Activated T-helper 1 cell treated with anti-CD3 and anti-CD28 coated beads, Interleukin-12 subunit alpha, Interleukin-12 subunit beta, Interleukin-2, Interleukin-4 antibody, amounts not matched to agents 30 ng/mL and 10 ng/mL and 1 ng/mL, durations not matched to agents 14 hours and 24 hours and 36 hours (primary cell): ENCODE measurements at regions of chr11 and their contacts with region 1.

Region 1: DNA sequence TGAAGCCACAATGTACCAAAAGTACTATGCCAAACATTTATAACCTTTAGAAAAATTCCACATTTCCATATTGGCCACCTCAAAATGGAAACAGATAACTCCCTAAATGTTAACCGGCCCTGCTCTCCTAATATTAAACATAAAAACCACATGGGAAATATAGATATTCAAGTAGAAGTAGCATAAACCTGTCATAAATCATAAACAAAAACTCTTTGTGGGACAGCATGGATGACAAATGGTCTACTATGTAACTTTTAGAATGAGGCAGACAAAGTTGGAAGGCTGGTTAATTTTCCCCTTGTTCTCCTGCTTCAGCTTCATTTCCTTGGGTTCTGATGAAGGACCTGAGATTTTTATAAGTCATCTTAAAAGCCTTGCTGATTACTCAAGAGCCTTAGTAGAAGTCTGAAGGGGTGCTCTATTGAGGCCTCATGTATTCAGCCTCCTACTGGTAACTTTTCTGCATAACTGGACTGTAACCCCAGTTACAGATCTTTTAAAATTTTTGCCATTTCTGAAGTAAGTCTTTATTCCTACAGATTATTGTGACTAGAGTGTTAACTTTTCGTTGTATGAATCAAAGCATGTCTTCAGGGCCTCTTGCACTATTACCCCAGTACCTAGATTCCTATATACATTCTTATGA is 116.4 kb downstream of the STIM1 start:
- DNase-seq: no peak
- H3K4me3 Mint-ChIP-seq: no peak overlapping the region
- H3K27ac Mint-ChIP-seq: no peak overlapping the region
- H3K4me1 Mint-ChIP-seq: peaks cover 63% of the 10 kb centered on the region
- H3K27me3 Mint-ChIP-seq: no peaks in the 10 kb centered on the region

Region 2: DNA sequence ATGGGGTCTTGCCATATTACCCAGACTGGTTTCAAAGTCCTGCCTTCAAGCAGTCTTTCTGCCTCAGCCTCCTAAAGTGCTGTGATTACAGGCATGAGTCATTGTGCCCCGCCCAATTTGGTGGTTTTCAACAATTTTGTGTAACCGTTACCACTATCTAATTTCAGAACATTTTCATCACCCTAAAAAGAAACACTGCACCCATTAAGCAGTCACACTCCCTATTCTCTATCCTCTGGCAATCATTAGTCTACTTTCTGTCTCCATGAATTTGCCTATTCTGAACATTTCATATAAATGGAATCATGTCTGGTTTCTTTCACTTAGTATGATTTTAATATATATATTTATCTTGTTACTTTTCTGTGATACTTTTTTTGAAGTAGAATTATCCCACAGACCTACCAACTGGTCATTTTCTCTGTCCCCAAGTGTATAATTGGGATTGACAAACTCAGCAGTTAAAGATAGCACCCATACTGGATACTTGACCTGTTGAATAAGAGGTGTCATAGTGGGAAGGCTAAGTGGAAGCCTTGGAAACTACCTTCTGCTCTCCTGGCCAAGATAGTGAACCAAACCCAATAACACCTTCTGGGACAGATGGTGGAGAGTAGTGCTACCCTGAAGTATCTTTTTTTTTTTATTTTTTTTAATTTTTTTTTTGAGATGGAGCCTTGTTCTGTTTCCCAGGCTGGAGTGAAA is 51.6 kb before region 1 on chr11:
- intact Hi-C with region 1: loop called (anchors 1 kb)
- DNase-seq: peak; percentile 59
- H3K4me3 Mint-ChIP-seq: no peak overlapping the region
- H3K27ac Mint-ChIP-seq: peak overlapping the region; percentile 43
- H3K4me1 Mint-ChIP-seq: peaks cover 55% of the 10 kb centered on the region
- H3K27me3 Mint-ChIP-seq: no peaks in the 10 kb centered on the region

Region 3: DNA sequence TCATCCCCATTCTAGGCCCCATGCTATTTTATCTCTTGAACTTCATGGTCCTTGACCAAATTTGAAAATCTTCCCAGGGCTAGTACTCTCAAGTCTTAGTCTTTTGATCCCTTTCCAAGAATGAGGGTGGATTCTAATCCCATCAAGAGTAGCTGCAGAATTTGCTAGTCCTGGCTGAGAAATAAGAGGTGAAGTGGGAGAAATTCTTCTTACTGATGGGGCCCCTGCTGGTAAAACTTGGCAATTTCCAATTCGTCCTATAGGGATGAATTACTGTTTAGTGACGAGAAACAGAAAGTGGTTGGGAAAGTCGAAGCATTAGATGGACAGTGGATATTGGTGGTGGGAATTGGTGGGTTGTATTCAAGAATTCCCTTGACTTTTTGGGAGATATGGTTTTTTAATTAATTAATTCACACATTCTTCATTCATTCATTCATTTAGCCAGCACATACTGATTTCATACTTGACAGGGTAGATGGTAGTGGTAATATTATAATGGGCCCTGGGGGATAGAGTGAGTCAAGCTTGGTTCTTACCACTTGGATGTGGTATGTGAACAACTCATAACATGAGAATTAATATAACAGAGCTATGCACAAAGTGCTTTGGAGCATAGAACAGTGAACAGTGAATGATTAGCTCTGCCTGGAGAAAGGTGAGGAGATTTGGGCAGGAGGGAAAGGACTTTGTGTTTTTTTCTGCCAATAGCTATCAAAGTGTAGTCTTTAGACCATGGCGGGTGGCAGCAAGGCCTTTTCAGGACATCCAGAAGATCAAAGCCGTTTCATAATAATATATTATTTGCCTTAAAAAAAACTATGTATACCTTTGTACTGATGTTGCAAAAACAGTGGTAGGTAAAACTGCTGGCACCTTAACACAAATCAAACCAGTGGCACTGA is 12.6 kb before region 1 on chr11:
- intact Hi-C with region 1: loop called (anchors 1 kb)
- DNase-seq: no peak
- H3K4me3 Mint-ChIP-seq: no peak overlapping the region
- H3K27ac Mint-ChIP-seq: no peak overlapping the region
- H3K4me1 Mint-ChIP-seq: peaks cover 70% of the 10 kb centered on the region
- H3K27me3 Mint-ChIP-seq: no peaks in the 10 kb centered on the region

Region 4: DNA sequence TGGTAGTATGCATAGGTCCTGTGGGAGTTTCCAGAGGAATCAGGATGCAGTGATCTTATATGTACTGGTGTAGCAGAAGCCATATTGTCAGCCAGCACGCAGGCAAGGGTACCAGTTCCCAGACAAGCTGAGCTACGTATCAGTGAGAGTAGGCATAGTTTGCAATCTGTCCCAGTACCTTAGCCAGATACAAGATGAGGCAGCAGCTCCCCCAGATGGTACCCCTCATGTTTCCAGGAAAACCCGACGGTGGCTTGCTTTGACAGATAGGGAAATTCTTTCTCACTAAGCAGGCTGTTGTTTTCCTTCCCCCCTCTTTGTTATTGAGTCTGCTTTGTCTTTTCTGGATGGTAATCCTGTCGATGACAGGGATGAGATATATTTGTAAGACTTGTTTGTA is 13.0 kb after region 1 on chr11:
- intact Hi-C with region 1: loop called (anchors 1 kb)
- DNase-seq: peak; percentile 8
- H3K4me3 Mint-ChIP-seq: no peak overlapping the region
- H3K27ac Mint-ChIP-seq: peak overlapping the region; percentile 59
- H3K4me1 Mint-ChIP-seq: peaks cover 76% of the 10 kb centered on the region
- H3K27me3 Mint-ChIP-seq: no peaks in the 10 kb centered on the region

Region 5: GRCh38 chr11:4065601-4066377 is 93.9 kb after region 1 on chr11:
- intact Hi-C with region 1: loop called (anchors 5 kb)
- DNase-seq: no peak
- H3K4me3 Mint-ChIP-seq: no peak overlapping the region
- H3K27ac Mint-ChIP-seq: no peak overlapping the region
- H3K4me1 Mint-ChIP-seq: peaks cover 61% of the 10 kb centered on the region
- H3K27me3 Mint-ChIP-seq: no peaks in the 10 kb centered on the region

Region 6: GRCh38 chr11:4076774-4077173 is 104.9 kb after region 1 on chr11:
- intact Hi-C with region 1: no loop called
- DNase-seq: no peak
- H3K4me3 Mint-ChIP-seq: no peak overlapping the region
- H3K27ac Mint-ChIP-seq: no peak overlapping the region
- H3K4me1 Mint-ChIP-seq: peaks cover 9% of the 10 kb centered on the region
- H3K27me3 Mint-ChIP-seq: no peaks in the 10 kb centered on the region